Lower lobe of right lung (tissue), 2 donors: ENCODE measurements at regions of chr3 and their contacts with region 1.

Region 1: DNA sequence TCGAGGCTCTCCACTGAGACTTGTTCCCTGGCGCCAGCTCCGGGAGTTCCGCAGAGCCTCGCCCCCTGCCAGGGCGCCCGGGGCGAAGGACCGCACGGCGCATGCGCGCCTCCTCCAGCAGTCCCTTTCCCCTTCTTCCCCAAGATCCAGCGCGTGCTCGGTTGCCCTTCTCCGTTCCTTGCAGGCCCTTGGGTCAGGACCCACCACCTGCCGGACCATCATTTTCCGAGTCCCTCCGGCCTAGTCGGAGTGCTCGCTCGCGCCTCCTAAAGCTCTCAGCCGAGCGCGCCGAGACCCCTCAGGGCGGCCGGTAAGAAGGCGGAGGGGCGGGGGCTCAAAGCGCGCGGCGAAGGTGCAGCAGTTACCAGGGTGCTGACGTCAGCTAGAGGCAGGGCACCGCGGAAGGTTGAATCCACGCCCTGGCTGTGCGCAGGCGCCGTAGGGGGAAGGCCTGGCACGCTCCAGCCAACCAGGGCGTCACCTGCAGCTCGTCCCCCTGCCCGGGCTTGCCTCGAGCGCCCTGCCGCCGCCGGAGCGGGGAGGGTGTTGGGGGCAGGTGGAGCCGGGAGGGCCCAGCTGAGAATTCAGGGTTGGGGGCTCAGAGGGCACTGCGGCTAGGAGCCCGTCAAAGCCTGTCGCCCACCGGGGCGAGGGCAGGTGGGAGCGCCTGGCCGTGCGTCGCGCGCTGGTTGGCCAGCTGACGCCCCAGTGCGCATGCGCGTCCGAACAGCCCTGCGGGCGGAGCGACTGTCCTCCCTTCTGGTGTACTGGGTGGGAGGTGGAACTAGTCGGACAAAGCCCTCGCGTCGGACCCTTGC is at the start of gene TCAIM:
- DNase-seq: peak; percentile 99
- ATAC-seq: peak; percentile 99
- H3K4me3 ChIP-seq: peak within 1 kb of the TSS; percentile 70
- H3K27ac ChIP-seq: peak within 1 kb of the TSS; percentile 99
- H3K4me1 ChIP-seq: peaks cover 35% of the 10 kb centered on the region
- H3K27me3 ChIP-seq: no peaks in the 10 kb centered on the region
- CTCF ChIP-seq: no peak
- total RNA-seq, gene TCAIM: 33.5 TPM

Region 2: DNA sequence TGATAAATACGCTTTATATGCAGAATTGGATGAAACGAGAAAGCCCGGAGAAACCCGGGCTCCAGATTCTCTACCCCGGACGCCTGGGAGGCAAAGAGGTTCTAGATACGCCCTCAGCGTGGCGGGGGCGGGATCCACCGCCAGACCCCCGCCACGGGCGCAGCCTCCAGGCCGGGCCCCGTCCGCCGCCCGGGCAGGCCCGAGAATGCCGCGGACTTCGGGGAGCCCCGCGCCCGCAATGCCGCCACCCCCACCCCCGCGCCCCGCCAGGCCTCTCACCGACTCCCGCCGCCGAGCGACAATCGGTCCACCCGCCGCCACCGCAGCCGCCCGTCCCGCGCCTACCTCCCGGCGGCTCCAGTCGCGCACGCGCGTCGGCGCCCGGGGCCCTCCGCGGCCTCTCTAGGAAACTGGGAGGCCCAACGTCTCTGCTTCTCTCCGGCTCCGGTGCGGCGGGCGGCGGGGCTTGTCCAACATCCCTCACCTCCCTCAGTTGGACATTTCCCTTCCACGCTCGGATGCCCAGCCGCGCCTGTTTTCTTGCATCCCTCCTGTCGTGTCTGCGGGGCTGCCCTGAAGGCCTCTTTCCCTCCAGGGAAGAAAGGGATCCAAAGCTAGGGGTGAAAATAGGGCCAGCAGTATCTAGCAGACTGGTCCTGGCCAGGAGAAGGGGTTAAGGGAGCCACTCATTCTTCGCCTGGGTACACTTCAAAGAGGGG is 139.3 kb after region 1 on chr3 and contains the start of gene ZNF445:
- intact Hi-C with region 1: loop called (anchors 10 kb)
- DNase-seq: peak; percentile 88
- ATAC-seq: peak; percentile 98 to 99
- H3K4me3 ChIP-seq: peak within 1 kb of the TSS; percentile 78
- H3K27ac ChIP-seq: peak within 1 kb of the TSS; percentile 76
- H3K4me1 ChIP-seq: peaks cover 19% of the 10 kb centered on the region
- H3K27me3 ChIP-seq: no peaks in the 10 kb centered on the region
- CTCF ChIP-seq: no peak
- total RNA-seq, gene ZNF445: 21.1 TPM